ENCODE measurements at regions of chr17 and their contacts with region 1.

Region 1: DNA sequence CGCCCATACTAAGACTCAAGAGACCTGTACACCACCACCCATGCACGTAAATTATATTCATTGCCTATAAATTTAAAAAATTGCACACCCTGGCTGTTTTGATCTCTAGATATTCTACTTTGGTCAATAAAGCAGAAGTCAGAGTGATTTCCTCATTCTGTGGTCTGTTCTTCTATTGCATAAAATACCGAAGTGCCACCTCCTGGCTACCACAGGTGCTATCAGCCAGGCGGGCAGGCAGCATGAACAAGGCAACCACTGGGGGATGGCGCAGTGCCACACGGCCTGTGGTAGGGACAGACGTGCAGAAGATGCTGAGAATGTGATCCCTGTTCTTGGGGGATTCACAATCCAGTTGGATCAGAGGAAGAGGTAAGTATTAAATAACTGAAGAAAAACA is 122.3 kb downstream of the CDK5R1 start:
- DNase-seq: peak; percentile 46
- H3K4me3 ChIP-seq: no peak overlapping the region
- H3K27ac ChIP-seq: no peak overlapping the region
- H3K4me1 ChIP-seq: no peaks in the 10 kb centered on the region
- H3K27me3 ChIP-seq: no peaks in the 10 kb centered on the region
- CTCF ChIP-seq: peak in 4 of 5 experiments; percentile 6 to 40 (median 11)
- EP300 ChIP-seq: no peak
- POLR2A ChIP-seq: no peak

Region 2: DNA sequence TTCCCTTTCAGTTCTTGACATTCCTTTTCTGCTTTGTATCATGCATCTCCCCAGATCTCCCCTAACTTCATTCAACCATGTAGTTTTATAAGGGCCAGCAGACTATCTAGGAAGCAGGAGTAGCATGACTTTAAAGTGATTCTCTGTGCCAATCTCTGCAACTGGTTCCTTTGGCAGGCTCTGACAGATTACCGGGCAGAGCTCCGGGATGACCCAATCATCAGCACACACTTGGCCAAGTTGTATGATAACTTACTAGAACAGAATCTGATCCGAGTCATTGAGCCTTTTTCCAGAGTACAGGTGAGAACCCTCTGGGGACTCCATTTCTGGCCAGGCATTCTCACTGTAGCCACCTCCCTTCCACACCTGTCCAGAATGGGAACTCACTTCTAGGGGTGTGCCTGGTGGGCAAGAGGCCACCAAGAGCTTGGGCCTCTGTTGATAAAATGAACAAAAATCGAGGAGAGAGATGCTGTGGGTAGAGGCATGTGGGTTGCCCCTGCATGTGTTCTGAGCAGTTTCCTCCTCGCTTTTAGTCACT is 129.9 kb before region 1 on chr17:
- in situ Hi-C with region 1: loop called in 1 of 4 experiments (anchors 10 kb)
- intact Hi-C with region 1: no loop called
- DNase-seq: no peak
- H3K4me3 ChIP-seq: no peak overlapping the region
- H3K27ac ChIP-seq: no peak overlapping the region
- H3K4me1 ChIP-seq: peaks cover 0 to 7% (median 0%) of the 10 kb centered on the region in 4 donors
- H3K27me3 ChIP-seq: no peaks in the 10 kb centered on the region
- CTCF ChIP-seq: no peak
- EP300 ChIP-seq: no peak
- POLR2A ChIP-seq: no peak

Region 3: DNA sequence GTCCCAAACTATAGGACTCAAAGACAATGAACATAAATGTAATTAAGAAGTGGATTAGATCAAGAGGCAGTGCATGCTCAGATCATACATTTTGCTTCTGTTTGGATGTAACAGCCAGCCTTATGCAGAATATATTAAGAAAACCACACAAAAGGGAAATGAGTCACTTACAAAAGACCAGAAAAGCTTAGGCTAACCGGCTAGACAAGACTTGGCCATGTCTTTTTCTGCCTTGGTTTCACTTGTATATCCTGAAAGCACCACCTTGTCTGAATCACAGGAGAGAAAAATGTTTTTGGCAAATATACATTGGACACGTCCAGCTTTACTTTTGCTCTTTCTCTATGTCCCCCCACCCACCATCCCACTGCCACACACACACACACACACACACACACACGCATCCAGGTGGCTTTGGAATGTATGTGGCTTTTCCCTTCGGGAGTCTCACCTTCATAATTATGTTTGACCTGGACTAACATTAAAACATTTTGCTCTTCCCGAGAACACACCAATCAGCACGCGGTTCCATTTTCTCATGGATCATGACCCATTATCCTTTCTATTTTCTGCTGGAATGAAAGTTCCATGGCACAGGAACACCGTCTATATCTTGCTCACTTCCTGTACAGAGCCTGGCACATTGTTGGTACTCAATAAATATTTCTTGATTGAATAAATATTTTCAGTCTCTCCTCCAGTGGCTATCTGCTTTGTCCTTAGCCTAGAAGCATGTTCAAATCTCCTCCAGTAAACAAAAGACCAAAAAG is 57.7 kb before region 1 on chr17:
- in situ Hi-C with region 1: no loop called
- intact Hi-C with region 1: no loop called
- DNase-seq: no peak
- H3K4me3 ChIP-seq: no peak overlapping the region
- H3K27ac ChIP-seq: no peak overlapping the region
- H3K4me1 ChIP-seq: peaks cover 0 to 10% (median 4%) of the 10 kb centered on the region in 4 donors
- H3K27me3 ChIP-seq: no peaks in the 10 kb centered on the region
- CTCF ChIP-seq: no peak
- EP300 ChIP-seq: no peak
- POLR2A ChIP-seq: no peak